Endothelial cell of umbilical vein (primary cell): ENCODE measurements at regions of chr1 and their contacts with region 1.

Region 1: GRCh38 chr1:160376525-160377131 is 9.8 kb downstream of the NHLH1 start:
- DNase-seq: peak; percentile 65
- H3K4me3 ChIP-seq: no peak overlapping the region
- H3K27ac ChIP-seq: no peak overlapping the region
- H3K4me1 ChIP-seq: no peaks in the 10 kb centered on the region
- H3K27me3 ChIP-seq: peaks cover 20 to 26% of the 10 kb centered on the region in 2 experiments
- CTCF ChIP-seq: peak; percentile 83 to 92
- POLR2A ChIP-seq: no peak

Region 2: GRCh38 chr1:160058087-160058486 is 318.5 kb before region 1 on chr1:
- CTCF ChIA-PET with region 1: interaction called, 15 read pairs
- POLR2A ChIA-PET with region 1: no interaction called
- dilution Hi-C with region 1: no loop called
- intact Hi-C with region 1: no loop called
- DNase-seq: peak; percentile 3
- H3K4me3 ChIP-seq: no peak overlapping the region
- H3K27ac ChIP-seq: no peak overlapping the region
- H3K4me1 ChIP-seq: no peaks in the 10 kb centered on the region
- H3K27me3 ChIP-seq: peaks cover 7 to 17% of the 10 kb centered on the region in 2 experiments
- CTCF ChIP-seq: no peak
- POLR2A ChIP-seq: no peak

Region 3: DNA sequence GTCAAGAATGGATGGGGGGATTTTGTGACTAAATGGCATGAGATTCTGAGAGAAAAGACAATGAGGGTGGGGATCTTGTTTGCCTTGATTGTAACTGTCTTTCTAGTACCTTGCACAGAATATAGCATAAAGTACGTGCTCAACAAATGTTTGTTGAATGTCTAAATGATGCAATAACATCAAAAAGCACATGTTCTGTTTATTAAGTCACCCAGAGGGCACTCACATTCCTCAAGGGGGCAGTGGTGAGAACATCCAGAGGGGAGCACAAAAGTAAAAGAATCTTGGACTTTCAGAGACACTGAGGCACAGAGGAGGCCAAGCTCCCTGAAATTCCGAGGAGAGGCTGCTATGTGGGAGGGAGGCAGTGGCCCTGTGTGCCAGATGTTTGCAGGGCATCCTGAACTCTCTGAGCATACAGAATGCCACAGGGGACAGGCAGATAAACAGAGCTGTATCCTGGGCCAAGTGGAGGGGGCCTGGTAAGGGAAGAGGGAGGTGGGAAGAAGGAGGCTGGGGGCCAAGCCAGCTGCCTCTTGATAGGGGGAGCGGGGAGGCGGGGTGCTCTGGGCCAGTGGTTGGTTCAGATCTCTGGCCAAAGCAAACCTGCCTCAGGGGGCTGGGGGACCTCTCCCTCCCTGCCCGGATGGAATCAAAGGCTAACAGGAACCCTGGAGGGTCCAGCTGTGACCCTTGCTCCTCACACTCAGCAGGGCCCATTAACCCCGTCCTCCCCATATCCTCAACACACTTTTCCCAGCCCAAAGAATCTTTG is 267.6 kb before region 1 on chr1:
- CTCF ChIA-PET with region 1: interaction called, 98 read pairs
- POLR2A ChIA-PET with region 1: no interaction called
- dilution Hi-C with region 1: no loop called
- intact Hi-C with region 1: no loop called
- DNase-seq: peak; percentile 34
- H3K4me3 ChIP-seq: no peak overlapping the region
- H3K27ac ChIP-seq: no peak overlapping the region
- H3K4me1 ChIP-seq: no peaks in the 10 kb centered on the region
- H3K27me3 ChIP-seq: peaks cover 20 to 27% of the 10 kb centered on the region in 2 experiments
- CTCF ChIP-seq: peak; percentile 55 to 58
- POLR2A ChIP-seq: no peak

Region 4: GRCh38 chr1:160251687-160252526 is 124.7 kb before region 1 on chr1:
- CTCF ChIA-PET with region 1: interaction called, 13 read pairs
- POLR2A ChIA-PET with region 1: no interaction called
- dilution Hi-C with region 1: no loop called
- intact Hi-C with region 1: no loop called
- DNase-seq: peak; percentile 57
- H3K4me3 ChIP-seq: no peak overlapping the region
- H3K27ac ChIP-seq: no peak overlapping the region
- H3K4me1 ChIP-seq: peaks cover 5% of the 10 kb centered on the region
- H3K27me3 ChIP-seq: no peaks in the 10 kb centered on the region
- CTCF ChIP-seq: peak; percentile 49 to 64
- POLR2A ChIP-seq: no peak

Region 5: GRCh38 chr1:160354388-160354985 is 22.1 kb before region 1 on chr1:
- CTCF ChIA-PET with region 1: interaction called, 100 read pairs
- POLR2A ChIA-PET with region 1: no interaction called
- dilution Hi-C with region 1: no loop called
- intact Hi-C with region 1: loop called (anchors 1 kb)
- DNase-seq: no peak
- H3K4me3 ChIP-seq: no peak overlapping the region
- H3K27ac ChIP-seq: no peak overlapping the region
- H3K4me1 ChIP-seq: no peaks in the 10 kb centered on the region
- H3K27me3 ChIP-seq: no peaks in the 10 kb centered on the region
- CTCF ChIP-seq: peak; percentile 56 to 62
- POLR2A ChIP-seq: no peak

Region 6: DNA sequence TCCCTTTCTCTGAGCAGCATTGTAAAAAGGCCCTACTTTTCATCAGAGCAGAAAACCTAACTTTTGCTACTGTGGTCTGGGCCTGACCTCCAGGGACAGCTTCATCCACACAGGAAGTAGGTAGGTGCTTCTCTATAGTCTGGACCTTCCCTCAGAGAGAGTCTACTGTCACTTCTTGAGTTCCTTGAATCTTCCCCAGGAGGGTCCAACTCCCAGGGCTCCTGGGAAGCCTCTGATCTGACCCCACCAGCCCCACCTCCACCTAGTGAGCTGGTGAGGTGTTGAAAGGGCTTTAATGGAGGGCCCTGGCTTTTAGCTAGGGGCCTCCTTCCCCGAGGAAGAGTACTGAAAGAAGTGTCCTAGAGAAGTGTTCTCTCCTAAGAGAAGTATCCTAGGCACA is 21.0 kb after region 1 on chr1:
- CTCF ChIA-PET with region 1: interaction called, 10 read pairs
- POLR2A ChIA-PET with region 1: no interaction called
- dilution Hi-C with region 1: no loop called
- intact Hi-C with region 1: no loop called
- DNase-seq: no peak
- H3K4me3 ChIP-seq: no peak overlapping the region
- H3K27ac ChIP-seq: no peak overlapping the region
- H3K4me1 ChIP-seq: peaks cover under 1% of the 10 kb centered on the region
- H3K27me3 ChIP-seq: peaks cover 65 to 79% of the 10 kb centered on the region in 2 experiments
- CTCF ChIP-seq: no peak
- POLR2A ChIP-seq: no peak